GM12878 (cell line): ENCODE measurements at regions of chr12 and their contacts with region 1.

Region 1: DNA sequence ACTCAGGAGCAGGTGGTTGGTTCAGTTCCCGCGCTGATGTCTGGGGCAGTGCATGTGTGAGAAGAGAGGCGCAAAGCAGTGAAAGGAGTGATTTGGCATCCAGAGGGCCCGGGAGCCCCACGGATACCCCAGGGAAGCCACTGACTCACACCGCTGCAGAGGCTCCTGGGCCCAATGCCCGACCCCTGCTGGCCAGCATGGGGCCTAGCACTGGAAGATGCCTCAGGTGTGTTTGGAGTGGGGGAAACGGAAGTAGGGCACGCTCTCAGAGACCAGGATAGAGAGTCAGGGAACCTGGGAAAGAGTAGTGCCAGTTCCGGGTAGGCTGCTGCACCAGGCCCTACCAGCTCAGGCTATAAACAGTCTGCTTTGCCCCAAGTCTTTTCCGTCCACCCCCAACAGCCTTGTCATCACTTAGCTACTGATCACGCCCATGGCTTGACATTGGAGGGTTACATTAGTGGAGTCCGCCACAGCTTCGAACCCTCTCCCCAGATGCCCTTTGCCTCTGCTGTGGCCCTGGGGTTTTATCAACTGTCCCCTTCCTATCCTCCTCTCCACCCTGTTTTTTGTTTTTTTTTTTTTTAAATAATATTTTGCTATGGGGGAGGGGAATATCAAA is 9.5 kb upstream of the CSAD start:
- DNase-seq: no peak
- ATAC-seq: peak; percentile 90
- H3K4me3 ChIP-seq: no peak overlapping the region
- H3K27ac ChIP-seq: no peak overlapping the region
- H3K4me1 ChIP-seq: no peaks in the 10 kb centered on the region
- H3K27me3 ChIP-seq: no peaks in the 10 kb centered on the region
- CTCF ChIP-seq: peak; percentile 52 to 87 (median 74)
- EP300 ChIP-seq: no peak
- POLR2A ChIP-seq: peak; percentile 66
- RAD21 ChIP-seq: peak; percentile 59

Region 2: DNA sequence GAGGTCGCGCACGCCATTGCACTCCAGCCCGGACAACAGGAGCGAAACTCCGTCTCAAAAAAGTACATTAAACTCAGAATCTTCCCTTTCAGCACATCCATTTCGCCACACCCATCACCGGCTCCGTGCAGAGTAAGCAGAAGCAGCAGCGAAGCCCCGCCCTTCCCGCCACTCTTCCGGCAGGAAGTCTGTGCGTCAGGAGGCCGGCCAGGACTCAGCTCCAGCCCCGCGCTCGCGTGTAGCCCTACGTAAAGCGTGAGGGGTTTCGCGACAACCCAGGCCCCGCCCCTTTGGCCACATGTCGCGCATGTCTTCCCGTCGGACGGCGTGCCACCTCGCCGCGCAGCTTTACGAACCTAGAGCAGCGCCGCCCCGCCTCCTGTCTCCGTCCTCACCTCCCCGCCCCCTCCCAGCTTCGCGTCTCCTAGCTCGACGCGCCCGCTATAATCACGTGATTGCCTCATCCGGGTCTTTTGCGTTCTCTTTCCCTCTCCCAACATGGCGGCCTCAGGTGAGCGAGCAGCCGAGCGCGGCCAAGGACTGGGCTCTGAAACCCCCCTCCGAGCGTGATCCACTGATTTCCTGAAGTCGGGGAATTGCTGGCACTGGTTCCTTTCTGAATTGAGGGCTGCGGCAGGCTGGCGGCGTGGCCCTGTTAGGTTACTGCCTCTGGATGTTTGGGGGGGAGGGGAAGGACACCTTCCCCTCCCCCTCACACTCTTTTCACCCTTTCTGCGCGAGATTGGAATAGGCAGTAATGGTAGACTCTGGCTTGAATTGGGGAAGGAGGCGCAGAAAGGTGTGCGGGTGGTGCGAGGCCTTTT is 184.0 kb before region 1 on chr12 and contains the start of gene EIF4B:
- CTCF ChIA-PET with region 1: no interaction called
- POLR2A ChIA-PET with region 1: no interaction called
- RAD21 ChIA-PET with region 1: no interaction called
- SMC1A ChIA-PET with region 1: no interaction called
- in situ Hi-C with region 1: no loop called
- intact Hi-C with region 1: no loop called
- DNase-seq: peak; percentile 99
- ATAC-seq: peak; percentile 95
- H3K4me3 ChIP-seq: peak within 1 kb of the TSS; percentile 91
- H3K27ac ChIP-seq: peak within 1 kb of the TSS; percentile 95
- H3K4me1 ChIP-seq: peaks cover 2% of the 10 kb centered on the region; the same call in 1 of the 2 replicates
- H3K27me3 ChIP-seq: no peaks in the 10 kb centered on the region
- CTCF ChIP-seq: no peak
- EP300 ChIP-seq: 0 out of 4 replicates have a peak, but pooled peaks have one; percentile 30 to 43
- POLR2A ChIP-seq: peak; percentile 81
- RAD21 ChIP-seq: no peak
- polyA plus RNA-seq, gene EIF4B: 133 to 144 TPM

Region 3: GRCh38 chr12:53174881-53175491 is 15.2 kb before region 1 on chr12:
- CTCF ChIA-PET with region 1: interaction called, 12 read pairs
- POLR2A ChIA-PET with region 1: interaction called, 3 read pairs
- RAD21 ChIA-PET with region 1: no interaction called
- SMC1A ChIA-PET with region 1: interaction called, 6 read pairs
- in situ Hi-C with region 1: no loop called
- intact Hi-C with region 1: no loop called
- DNase-seq: no peak
- ATAC-seq: peak; percentile 48
- H3K4me3 ChIP-seq: no peak overlapping the region
- H3K27ac ChIP-seq: no peak overlapping the region
- H3K4me1 ChIP-seq: peaks cover 14% of the 10 kb centered on the region; the same call in 1 of the 2 replicates
- H3K27me3 ChIP-seq: no peaks in the 10 kb centered on the region
- CTCF ChIP-seq: peak in 2 of 3 experiments; percentile 19 to 33; a peak in 2 of 6 replicates
- EP300 ChIP-seq: no peak
- POLR2A ChIP-seq: no peak
- RAD21 ChIP-seq: peak; percentile 42